AG04449 (cell line): ENCODE measurements at regions of chr6 and their contacts with region 1.

Region 1: GRCh38 chr6:100719883-100720682 is 161.0 kb downstream of the ASCC3 start:
- DNase-seq: no peak
- H3K4me3 ChIP-seq: no peak overlapping the region
- CTCF ChIP-seq: peak; percentile 26

Region 2: DNA sequence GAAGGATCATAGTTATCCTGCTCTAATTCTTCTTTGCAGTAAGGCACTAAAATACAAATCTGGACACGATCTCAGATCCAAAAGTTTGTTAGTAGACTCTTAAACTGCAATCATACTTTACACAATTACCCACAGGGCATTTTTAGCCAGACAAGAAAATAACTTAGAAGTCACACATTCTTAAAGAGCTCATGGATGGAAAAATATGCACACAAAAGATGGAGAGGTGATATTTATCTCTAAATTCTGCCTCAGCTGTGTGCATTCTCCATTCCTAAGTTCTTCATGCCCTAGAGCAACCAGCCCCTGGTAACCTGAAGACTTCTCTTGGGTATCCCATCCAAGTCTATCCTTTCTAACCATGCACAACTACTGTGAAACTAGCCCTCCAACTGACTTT is 10.0 kb before region 1 on chr6:
- CTCF ChIA-PET with region 1: interaction called, 10 read pairs
- POLR2A ChIA-PET with region 1: no interaction called
- DNase-seq: no peak
- H3K4me3 ChIP-seq: no peak overlapping the region
- CTCF ChIP-seq: no peak

Region 3: GRCh38 chr6:100730001-100730980 is 10.2 kb after region 1 on chr6:
- CTCF ChIA-PET with region 1: interaction called, 18 read pairs
- POLR2A ChIA-PET with region 1: no interaction called
- DNase-seq: no peak
- H3K4me3 ChIP-seq: no peak overlapping the region
- CTCF ChIP-seq: no peak

Region 4: GRCh38 chr6:101058296-101058695 is 338.2 kb after region 1 on chr6:
- CTCF ChIA-PET with region 1: no interaction called
- POLR2A ChIA-PET with region 1: no interaction called
- DNase-seq: no peak
- H3K4me3 ChIP-seq: no peak overlapping the region
- CTCF ChIP-seq: no peak

Region 5: GRCh38 chr6:101249470-101249869 is 529.4 kb after region 1 on chr6:
- CTCF ChIA-PET with region 1: no interaction called
- POLR2A ChIA-PET with region 1: no interaction called
- DNase-seq: no peak
- H3K4me3 ChIP-seq: no peak overlapping the region
- CTCF ChIP-seq: no peak